Activated T-helper 1 cell treated with anti-CD3 and anti-CD28 coated beads, Interleukin-12 subunit alpha, Interleukin-12 subunit beta, Interleukin-2, Interleukin-4 antibody, amounts not matched to agents 30 ng/mL and 10 ng/mL and 1 ng/mL, durations not matched to agents 14 hours and 24 hours and 36 hours (primary cell): ENCODE measurements at regions of chr15 and their contacts with region 1.

Region 1: GRCh38 chr15:90165659-90166421 is 35.3 kb upstream of the SEMA4B start:
- DNase-seq: peak; percentile 21
- H3K4me3 Mint-ChIP-seq: peak overlapping the region; percentile 40
- H3K27ac Mint-ChIP-seq: peak overlapping the region; percentile 62
- H3K4me1 Mint-ChIP-seq: peaks cover 21% of the 10 kb centered on the region
- H3K27me3 Mint-ChIP-seq: no peaks in the 10 kb centered on the region

Region 2: DNA sequence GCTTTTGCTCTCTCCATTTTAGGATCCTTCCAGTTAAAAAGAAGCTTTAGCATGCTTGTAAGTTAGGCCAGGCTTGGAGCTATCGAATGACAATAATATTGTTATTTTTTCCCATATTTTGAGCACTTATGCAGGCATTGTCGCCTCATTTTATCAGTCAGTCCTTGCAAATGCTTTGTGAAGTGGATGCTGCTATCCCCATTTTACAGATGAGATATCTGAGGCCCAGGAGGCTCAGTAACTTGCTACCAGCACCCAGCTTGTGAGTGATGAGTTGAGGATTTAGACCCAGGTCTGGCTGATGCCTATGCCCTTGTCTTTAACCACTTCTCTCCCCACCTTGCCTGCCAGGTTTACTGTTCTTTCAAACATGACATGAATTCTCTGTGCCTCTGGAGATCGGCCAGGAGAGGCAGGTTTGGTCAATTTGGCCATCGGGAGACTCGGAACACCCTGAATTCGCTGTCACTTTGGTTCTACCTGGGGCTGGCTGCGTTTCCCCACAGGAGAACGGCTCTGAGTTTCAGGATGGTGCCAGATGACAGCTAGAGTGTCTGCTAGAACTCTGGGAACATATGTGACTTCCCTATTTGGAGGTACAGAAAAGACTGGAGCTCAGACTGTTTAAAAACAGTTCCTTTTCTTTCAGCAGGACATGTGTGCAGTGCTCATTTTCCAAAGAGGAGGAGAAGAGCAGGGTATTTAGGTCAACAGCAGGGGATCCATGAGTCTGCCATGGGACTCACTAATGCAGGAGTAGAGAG is 190.2 kb before region 1 on chr15:
- intact Hi-C with region 1: no loop called
- DNase-seq: no peak
- H3K4me3 Mint-ChIP-seq: no peak overlapping the region
- H3K27ac Mint-ChIP-seq: no peak overlapping the region
- H3K4me1 Mint-ChIP-seq: no peaks in the 10 kb centered on the region
- H3K27me3 Mint-ChIP-seq: peaks cover 3% of the 10 kb centered on the region

Region 3: GRCh38 chr15:90143166-90143655 is 22.6 kb before region 1 on chr15:
- intact Hi-C with region 1: no loop called
- DNase-seq: peak; percentile 59
- H3K4me3 Mint-ChIP-seq: peak overlapping the region; percentile 1
- H3K27ac Mint-ChIP-seq: peak overlapping the region; percentile 52
- H3K4me1 Mint-ChIP-seq: peaks cover 26% of the 10 kb centered on the region
- H3K27me3 Mint-ChIP-seq: no peaks in the 10 kb centered on the region

Region 4: GRCh38 chr15:90184786-90185569 is 19.1 kb after region 1 on chr15:
- intact Hi-C with region 1: loop called (anchors 1 kb)
- DNase-seq: peak; percentile 49
- H3K4me3 Mint-ChIP-seq: peak overlapping the region; percentile 87
- H3K27ac Mint-ChIP-seq: peak overlapping the region; percentile 75
- H3K4me1 Mint-ChIP-seq: peaks cover 31% of the 10 kb centered on the region
- H3K27me3 Mint-ChIP-seq: peaks cover 5% of the 10 kb centered on the region

Region 5: DNA sequence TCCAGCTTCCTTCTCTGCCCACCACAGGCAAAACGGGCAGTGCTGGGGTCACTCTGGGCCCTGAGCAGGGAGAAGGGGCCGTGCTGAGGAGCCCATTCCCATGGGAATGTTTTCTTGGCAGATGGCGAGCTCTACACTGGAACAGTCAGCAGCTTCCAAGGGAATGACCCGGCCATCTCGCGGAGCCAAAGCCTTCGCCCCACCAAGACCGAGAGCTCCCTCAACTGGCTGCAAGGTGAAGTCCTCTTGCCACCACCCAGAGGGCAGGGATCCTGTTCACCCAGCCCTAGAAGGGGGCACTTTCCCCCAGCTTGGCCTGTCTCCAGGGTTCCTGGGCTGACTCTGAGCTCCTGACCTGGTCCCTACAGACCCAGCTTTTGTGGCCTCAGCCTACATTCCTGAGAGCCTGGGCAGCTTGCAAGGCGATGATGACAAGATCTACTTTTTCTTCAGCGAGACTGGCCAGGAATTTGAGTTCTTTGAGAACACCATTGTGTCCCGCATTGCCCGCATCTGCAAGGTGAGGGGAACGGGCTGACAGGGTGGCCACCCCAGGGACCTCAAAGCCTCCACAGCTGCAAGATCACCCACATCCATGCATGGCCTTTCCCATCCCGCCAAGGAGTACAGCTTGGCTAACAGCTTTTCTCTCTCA is 55.5 kb after region 1 on chr15:
- intact Hi-C with region 1: no loop called
- DNase-seq: no peak
- H3K4me3 Mint-ChIP-seq: no peak overlapping the region
- H3K27ac Mint-ChIP-seq: no peak overlapping the region
- H3K4me1 Mint-ChIP-seq: peaks cover 10% of the 10 kb centered on the region
- H3K27me3 Mint-ChIP-seq: no peaks in the 10 kb centered on the region